Activated CD8-positive, alpha-beta T cell treated with anti-CD3 and anti-CD28 coated beads for 36 hours (primary cell): ENCODE measurements at regions of chr11 and their contacts with region 1.

Region 1: DNA sequence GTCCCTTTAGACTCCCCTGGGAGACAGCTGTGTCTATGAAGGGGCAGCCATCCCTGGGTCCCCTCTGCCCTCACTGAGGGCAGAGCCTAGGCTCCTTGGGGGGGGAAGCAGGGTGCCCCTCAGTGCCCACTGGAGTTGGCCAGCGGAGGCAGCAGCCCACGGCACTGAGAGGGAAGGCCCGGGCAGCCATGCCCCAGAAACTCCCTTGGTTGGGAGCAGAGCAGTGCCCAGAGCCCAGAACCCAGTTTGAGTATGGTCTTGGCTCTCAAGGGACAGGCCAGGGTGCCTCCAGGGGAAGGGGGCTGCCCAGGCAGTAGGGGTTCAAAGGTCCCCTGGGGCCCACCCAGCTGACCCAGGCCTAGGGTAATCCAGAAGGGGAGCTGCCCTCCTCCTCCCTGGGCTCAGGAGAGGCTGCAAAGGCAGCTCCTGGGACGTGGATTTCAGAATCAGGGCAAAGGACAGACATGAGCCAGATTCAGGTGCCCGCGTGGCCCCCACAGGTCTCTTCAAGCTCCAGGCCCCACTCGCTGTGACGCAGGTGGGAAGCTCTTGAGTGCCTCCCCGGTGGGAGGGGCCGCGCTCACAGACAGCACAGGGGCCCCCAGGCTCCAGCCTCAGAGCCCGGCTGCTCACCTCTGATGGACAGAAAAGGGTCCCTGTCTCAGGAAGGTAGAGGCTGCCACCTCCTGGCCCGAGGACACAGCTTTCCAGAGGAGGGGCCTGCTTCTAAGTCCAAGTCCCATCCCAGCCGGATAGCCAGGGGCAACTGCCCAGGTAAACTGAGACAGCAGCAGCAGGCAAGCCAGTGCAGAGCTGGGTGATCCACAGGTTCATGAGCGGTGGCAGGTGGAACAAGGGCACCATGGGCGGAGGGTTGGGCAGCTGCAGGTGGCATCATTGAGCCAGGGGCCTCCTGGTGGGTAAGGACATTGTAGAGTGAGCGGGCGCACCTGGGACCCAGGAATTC is 2.6 kb downstream of the C11orf21 start:
- DNase-seq: peak; percentile 74
- ATAC-seq: peak; percentile 27
- H3K4me3 Mint-ChIP-seq: peak overlapping the region; percentile 35
- H3K27ac Mint-ChIP-seq: peak overlapping the region; percentile 57
- H3K4me1 Mint-ChIP-seq: peaks cover 56% of the 10 kb centered on the region
- H3K27me3 Mint-ChIP-seq: no peaks in the 10 kb centered on the region
- CTCF ChIP-seq: peak; percentile 59

Region 2: DNA sequence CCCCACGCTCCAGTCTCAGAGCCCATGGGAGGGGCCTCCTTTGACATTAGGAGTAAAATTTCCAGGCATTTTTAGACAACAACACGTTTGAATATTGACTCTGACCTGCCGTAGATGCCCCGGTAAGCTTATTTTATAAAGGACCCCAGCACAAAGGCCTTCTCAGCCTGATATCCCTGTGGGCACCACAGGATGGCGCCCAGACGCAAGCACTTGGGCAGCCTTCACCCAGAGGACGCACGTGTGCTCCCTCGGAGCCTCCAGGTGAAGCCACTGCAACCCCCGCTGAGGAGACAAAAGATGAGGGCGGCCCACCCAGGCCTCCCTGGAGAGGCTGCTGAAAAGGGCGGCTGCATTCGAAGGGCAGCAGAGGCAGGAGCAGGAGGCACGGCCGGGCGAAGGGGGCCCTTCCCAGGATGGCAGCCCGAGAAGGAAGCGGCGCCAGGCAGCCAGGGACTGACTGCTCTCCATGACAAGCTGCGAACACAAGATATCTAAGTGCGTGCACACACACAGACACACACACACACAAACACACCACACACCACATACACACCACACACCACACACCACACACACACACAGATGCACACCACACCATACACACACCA is 112.3 kb before region 1 on chr11:
- CTCF ChIA-PET with region 1: interaction called, 28 read pairs
- POLR2A ChIA-PET with region 1: no interaction called
- intact Hi-C with region 1: no loop called
- DNase-seq: peak; percentile 76
- ATAC-seq: peak; percentile 94
- H3K4me3 Mint-ChIP-seq: no peak overlapping the region
- H3K27ac Mint-ChIP-seq: no peak overlapping the region
- H3K4me1 Mint-ChIP-seq: no peaks in the 10 kb centered on the region
- H3K27me3 Mint-ChIP-seq: peaks cover 18% of the 10 kb centered on the region
- CTCF ChIP-seq: peak; percentile 75